ENCODE measurements at regions of chr1 and their contacts with region 1.

Region 1: GRCh38 chr1:62407405-62408009 is 29.3 kb upstream of the USP1 start:
- DNase-seq: peak in 12 of 42 donors; percentile 16 to 72 (median 40)

Region 2: GRCh38 chr1:62175568-62176179 is 231.8 kb before region 1 on chr1:
- intact Hi-C with region 1: loop called (anchors 5 kb)
- DNase-seq: peak in 36 of 42 donors; percentile 12 to 85 (median 59)

Measured in head of caudate nucleus (tissue), 42 donors.